Activated CD4-positive, alpha-beta T cell treated with anti-CD3 and anti-CD28 coated beads for 36 hours (primary cell): ENCODE measurements at regions of chr17 and their contacts with region 1.

Region 1: GRCh38 chr17:42577532-42578281 is at the start of gene PSMC3IP:
- DNase-seq: peak; percentile 98
- ATAC-seq: peak; percentile 92
- H3K4me3 Mint-ChIP-seq: peak within 1 kb of the TSS; percentile 88
- H3K27ac Mint-ChIP-seq: peak within 1 kb of the TSS; percentile 98
- H3K4me1 Mint-ChIP-seq: peaks cover 28% of the 10 kb centered on the region
- H3K27me3 Mint-ChIP-seq: no peaks in the 10 kb centered on the region
- total RNA-seq, gene PSMC3IP: 27.0 to 28.9 TPM

Region 2: GRCh38 chr17:42536048-42536371 is 41.7 kb before region 1 on chr17 and contains the start of gene NAGLU:
- CTCF ChIA-PET with region 1: interaction called, 4 read pairs
- POLR2A ChIA-PET with region 1: no interaction called
- intact Hi-C with region 1: loop called in 1 of 2 experiments (anchors 1 kb)
- DNase-seq: peak; percentile 92
- ATAC-seq: peak; percentile 87
- H3K4me3 Mint-ChIP-seq: peak within 1 kb of the TSS; percentile 86
- H3K27ac Mint-ChIP-seq: peak within 1 kb of the TSS; percentile 90
- H3K4me1 Mint-ChIP-seq: peaks cover 30% of the 10 kb centered on the region
- H3K27me3 Mint-ChIP-seq: no peaks in the 10 kb centered on the region
- total RNA-seq, gene NAGLU: 9.7 to 12.5 TPM

Region 3: GRCh38 chr17:42609182-42609813 is 31.6 kb after region 1 on chr17 and contains the starts of genes RETREG3 and TUBG1:
- CTCF ChIA-PET with region 1: interaction called, 80 read pairs
- POLR2A ChIA-PET with region 1: interaction called, 8 read pairs
- intact Hi-C with region 1: loop called (anchors 1 to 2 kb)
- DNase-seq: peak; percentile 100
- ATAC-seq: peak; percentile 92
- H3K4me3 Mint-ChIP-seq: peak within 1 kb of the TSS; percentile 95
- H3K27ac Mint-ChIP-seq: peak within 1 kb of the TSS; percentile 97
- H3K4me1 Mint-ChIP-seq: peaks cover 35% of the 10 kb centered on the region
- H3K27me3 Mint-ChIP-seq: no peaks in the 10 kb centered on the region
- total RNA-seq, gene RETREG3: 28.3 to 30.9 TPM
- total RNA-seq, gene TUBG1: 76.1 to 102 TPM

Region 4: DNA sequence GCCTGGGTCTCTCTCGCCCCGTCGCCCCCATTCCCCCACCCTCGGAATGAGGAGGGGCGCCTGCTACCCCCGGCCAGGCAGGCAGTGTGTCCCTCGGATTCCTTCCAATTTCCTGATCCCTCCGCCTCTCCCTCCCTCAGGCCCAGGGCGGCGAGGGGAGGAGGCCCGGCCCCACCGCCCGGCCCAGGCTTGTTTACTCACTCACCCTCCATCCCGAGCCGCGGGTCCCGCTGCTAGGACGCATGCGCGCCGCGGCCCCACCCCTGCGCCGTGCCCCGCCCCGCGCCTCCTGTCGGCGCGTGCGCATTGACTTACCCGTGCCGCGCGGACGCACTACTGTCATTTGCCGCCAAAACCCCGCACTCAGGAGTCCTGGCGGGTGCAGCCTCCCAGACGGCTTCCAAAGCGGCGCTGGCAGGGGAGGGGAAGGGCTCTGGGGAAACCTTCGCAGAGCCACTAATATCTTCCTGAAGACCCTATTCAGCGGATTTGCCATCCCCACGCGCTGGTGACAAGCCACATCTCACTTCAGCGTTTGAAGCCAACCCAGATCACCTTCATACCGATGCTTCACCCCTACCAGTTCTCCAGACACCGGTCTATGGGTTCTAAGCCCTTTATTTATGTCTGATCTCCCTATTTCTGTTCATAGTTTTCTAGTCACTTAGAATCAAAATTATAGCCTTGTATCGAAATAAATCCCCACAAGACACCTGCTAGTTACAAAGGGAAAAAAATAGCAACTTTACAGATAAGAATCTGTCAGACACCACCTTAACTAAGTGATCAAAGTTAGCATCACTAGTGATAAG is 167.3 kb after region 1 on chr17 and contains the start of gene EZH1:
- CTCF ChIA-PET with region 1: interaction called, 5 read pairs
- POLR2A ChIA-PET with region 1: no interaction called
- intact Hi-C with region 1: loop called (anchors 1 kb)
- DNase-seq: peak; percentile 96
- ATAC-seq: peak; percentile 91
- H3K4me3 Mint-ChIP-seq: peak within 1 kb of the TSS; percentile 89
- H3K27ac Mint-ChIP-seq: peak within 1 kb of the TSS; percentile 98
- H3K4me1 Mint-ChIP-seq: peaks cover 19% of the 10 kb centered on the region
- H3K27me3 Mint-ChIP-seq: peaks cover 7% of the 10 kb centered on the region
- total RNA-seq, gene EZH1: 28.6 to 29.5 TPM

Region 5: DNA sequence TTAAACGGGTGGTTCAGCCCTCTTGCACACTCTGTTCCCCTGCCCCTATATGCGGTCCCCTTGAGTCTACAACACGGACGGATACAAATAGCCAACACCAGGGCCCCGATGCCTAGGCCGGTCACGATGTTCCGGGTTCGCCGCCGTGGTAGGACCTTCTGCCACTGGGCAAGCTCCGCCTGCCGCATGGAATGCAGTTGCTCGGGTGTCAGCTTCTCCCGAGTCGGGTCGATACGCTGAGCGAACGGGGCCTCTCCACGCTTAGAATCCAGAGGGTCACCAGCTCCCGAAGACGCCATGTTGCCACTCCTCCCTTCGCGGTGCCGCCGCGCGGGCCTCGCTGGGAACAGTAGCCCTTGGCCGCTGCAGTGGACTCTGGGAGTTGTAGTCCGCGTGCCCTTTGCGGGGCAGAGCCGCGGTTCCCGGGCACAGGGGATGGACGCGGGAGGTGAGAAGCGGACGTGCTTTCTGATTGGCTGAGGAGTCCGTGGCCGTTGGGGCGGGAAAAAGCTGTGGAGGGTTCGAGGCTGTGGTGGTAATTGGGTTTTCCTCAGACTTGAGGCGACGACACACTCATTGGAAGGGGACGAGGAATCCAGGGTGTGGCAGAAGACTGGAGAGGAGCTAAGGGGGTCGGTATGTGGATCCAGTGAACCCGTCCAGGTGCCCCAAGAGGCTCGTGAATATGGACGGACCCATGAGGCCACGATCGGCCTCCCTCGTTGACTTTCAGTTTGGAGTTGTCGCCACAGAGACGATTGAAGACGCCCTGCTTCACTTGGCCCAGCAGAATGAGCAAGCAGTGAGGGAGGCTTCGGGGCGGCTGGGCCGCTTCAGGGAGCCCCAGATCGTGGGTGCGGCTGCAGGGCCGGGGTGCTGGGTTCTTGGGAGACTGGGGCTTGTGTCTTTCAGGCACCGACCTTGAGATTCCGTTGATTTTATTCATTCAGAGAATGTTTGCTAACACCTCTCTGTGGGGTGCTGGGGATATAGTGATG is 221.0 kb after region 1 on chr17 and contains the starts of genes CNTD1 and COA3:
- CTCF ChIA-PET with region 1: no interaction called
- POLR2A ChIA-PET with region 1: no interaction called
- intact Hi-C with region 1: loop called in 1 of 2 experiments (anchors 1 kb)
- DNase-seq: peak; percentile 92
- ATAC-seq: peak; percentile 100
- H3K4me3 Mint-ChIP-seq: peak within 1 kb of the TSS; percentile 87
- H3K27ac Mint-ChIP-seq: peak within 1 kb of the TSS; percentile 58
- H3K4me1 Mint-ChIP-seq: peaks cover 16% of the 10 kb centered on the region
- H3K27me3 Mint-ChIP-seq: no peaks in the 10 kb centered on the region
- total RNA-seq, gene CNTD1: not detected
- total RNA-seq, gene COA3: 30.1 to 31.4 TPM

Region 6: GRCh38 chr17:42980398-42981397 is 403.0 kb after region 1 on chr17 and contains the start of gene RUNDC1:
- CTCF ChIA-PET with region 1: no interaction called
- POLR2A ChIA-PET with region 1: no interaction called
- intact Hi-C with region 1: loop called in 1 of 2 experiments (anchors 1 kb)
- DNase-seq: peak; percentile 95
- ATAC-seq: peak; percentile 87
- H3K4me3 Mint-ChIP-seq: peak within 1 kb of the TSS; percentile 99
- H3K27ac Mint-ChIP-seq: peak within 1 kb of the TSS; percentile 98
- H3K4me1 Mint-ChIP-seq: peaks cover 32% of the 10 kb centered on the region
- H3K27me3 Mint-ChIP-seq: no peaks in the 10 kb centered on the region
- total RNA-seq, gene RUNDC1: 12.3 to 12.5 TPM